ENCODE measurements at regions of chr3 and their contacts with region 1.

Region 1: GRCh38 chr3:71168880-71169411 is 414.6 kb downstream of the FOXP1 start:
- DNase-seq: no peak
- H3K4me3 ChIP-seq: peak overlapping the region in 1 of 2 donors; percentile 46
- H3K27ac ChIP-seq: peak overlapping the region; percentile 70 to 87
- H3K4me1 ChIP-seq: peaks cover 9 to 56% of the 10 kb centered on the region in 2 donors
- H3K27me3 ChIP-seq: no peaks in the 10 kb centered on the region
- CTCF ChIP-seq: no peak

Region 2: DNA sequence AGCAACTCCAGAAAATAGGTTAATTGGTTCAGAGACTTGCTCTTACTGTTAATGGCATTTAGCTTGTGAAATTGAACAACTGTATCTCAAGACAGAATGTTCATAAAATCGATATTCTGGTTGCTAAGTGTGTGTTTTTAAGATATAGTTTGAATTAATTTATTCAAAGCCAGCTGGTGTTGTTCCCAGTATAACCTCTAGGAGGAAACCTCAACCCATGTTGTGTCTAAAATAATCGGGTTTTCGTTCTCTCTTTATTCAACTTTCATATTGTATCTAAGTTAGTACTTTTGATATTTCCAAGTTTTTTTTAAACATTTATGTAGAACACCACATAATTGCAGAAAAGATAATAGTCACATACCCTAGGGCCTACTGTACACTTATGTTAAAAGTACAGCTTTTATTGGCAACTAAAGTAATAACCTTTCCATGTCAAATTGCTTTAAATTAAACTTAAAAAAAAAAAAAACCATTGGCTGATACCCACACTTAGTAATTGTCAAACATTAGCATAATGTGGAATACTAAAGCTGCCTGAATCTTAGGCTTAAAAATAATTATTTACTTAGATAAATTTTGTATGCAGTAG is 1078.5 kb before region 1 on chr3:
- intact Hi-C with region 1: no loop called
- DNase-seq: no peak
- H3K4me3 ChIP-seq: peak overlapping the region in 1 of 2 donors; percentile 24
- H3K27ac ChIP-seq: no peak overlapping the region
- H3K4me1 ChIP-seq: peaks cover 0 to 8% of the 10 kb centered on the region in 2 donors
- H3K27me3 ChIP-seq: no peaks in the 10 kb centered on the region
- CTCF ChIP-seq: peak; percentile 56 to 73 (median 68)

Region 3: GRCh38 chr3:71109241-71109976 is 59.5 kb before region 1 on chr3:
- intact Hi-C with region 1: loop called (anchors 2 kb)
- DNase-seq: no peak
- H3K4me3 ChIP-seq: peak overlapping the region in 1 of 2 donors; percentile 22
- H3K27ac ChIP-seq: peak overlapping the region; percentile 72
- H3K4me1 ChIP-seq: peaks cover 0 to 76% of the 10 kb centered on the region in 2 donors
- H3K27me3 ChIP-seq: no peaks in the 10 kb centered on the region
- CTCF ChIP-seq: no peak

Region 4: GRCh38 chr3:71208211-71209108 is 39.5 kb after region 1 on chr3:
- intact Hi-C with region 1: loop called (anchors 5 kb)
- DNase-seq: no peak
- H3K4me3 ChIP-seq: no peak overlapping the region
- H3K27ac ChIP-seq: no peak overlapping the region
- H3K4me1 ChIP-seq: peaks cover 12 to 51% of the 10 kb centered on the region in 2 donors
- H3K27me3 ChIP-seq: no peaks in the 10 kb centered on the region
- CTCF ChIP-seq: no peak

Region 5: GRCh38 chr3:71226565-71227269 is 57.8 kb after region 1 on chr3:
- intact Hi-C with region 1: loop called (anchors 5 kb)
- DNase-seq: peak; percentile 18 to 74
- H3K4me3 ChIP-seq: peak overlapping the region; percentile 40 to 56
- H3K27ac ChIP-seq: peak overlapping the region; percentile 87 to 88
- H3K4me1 ChIP-seq: peaks cover 0 to 30% of the 10 kb centered on the region in 2 donors
- H3K27me3 ChIP-seq: no peaks in the 10 kb centered on the region
- CTCF ChIP-seq: no peak

Region 6: DNA sequence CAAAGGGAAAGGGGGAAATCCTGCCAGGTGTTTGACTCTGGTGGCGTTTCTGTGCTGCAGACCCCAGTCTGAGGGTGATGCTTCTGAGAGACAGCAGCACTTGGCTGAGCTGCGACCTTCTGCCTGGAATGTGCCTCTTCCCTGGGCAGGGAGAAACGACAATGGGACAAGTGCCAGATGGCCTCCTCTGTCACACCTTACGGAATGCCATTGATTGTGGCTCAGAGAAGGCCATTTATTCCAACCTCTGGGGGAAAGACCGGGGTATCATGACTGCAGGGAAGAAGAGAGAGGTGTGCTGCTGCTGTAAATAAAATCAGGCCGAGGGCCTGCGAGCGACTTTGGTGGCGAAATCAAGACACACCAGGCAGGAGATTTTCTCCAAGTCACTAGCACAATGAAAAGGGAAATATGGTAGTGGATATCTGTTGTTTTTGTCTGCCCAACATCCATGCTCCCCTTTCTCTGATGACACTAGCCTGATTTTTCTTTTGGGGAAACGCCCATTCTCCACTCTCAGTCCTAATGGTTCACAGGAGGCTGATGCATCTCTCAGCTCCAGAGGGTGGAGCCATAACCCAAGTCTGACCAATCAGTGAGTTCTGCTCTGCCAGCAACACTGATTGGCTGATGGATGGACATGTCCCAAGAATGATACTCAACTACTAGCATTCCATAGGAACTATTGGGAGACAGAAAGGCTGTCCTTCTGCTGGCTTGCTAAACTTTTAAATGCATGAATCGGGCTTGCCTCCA is 78.5 kb after region 1 on chr3:
- intact Hi-C with region 1: loop called (anchors 5 kb)
- DNase-seq: peak in 1 of 2 donors; percentile 58
- H3K4me3 ChIP-seq: no peak overlapping the region
- H3K27ac ChIP-seq: peak overlapping the region; percentile 69 to 86
- H3K4me1 ChIP-seq: peaks cover 0 to 21% of the 10 kb centered on the region in 2 donors
- H3K27me3 ChIP-seq: no peaks in the 10 kb centered on the region
- CTCF ChIP-seq: no peak

Region 7: DNA sequence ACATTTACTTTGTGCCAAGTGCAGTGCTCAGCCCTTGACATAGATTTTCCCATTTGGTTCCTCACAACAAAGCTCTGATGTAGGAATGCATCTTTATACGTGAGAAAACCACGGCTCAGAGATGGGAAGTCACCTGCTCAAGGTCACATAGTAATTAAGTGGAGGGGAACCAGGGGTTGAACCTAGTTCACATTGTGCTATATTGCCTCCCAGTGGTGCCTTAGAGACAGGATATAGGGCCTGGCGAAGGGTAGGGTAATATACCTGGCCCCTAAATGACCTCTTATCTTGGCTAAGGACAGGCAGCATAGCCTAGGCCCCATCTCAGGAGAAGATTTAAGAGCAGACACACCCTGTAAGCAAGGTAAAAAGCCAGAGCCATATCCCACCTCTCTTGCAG is 343.1 kb after region 1 on chr3:
- intact Hi-C with region 1: no loop called
- DNase-seq: no peak
- H3K4me3 ChIP-seq: no peak overlapping the region
- H3K27ac ChIP-seq: peak overlapping the region; percentile 44 to 59
- H3K4me1 ChIP-seq: peaks cover 0 to 21% of the 10 kb centered on the region in 2 donors
- H3K27me3 ChIP-seq: no peaks in the 10 kb centered on the region
- CTCF ChIP-seq: no peak